MCF 10A (cell line): ENCODE measurements at regions of chrX and their contacts with region 1.

Region 1: DNA sequence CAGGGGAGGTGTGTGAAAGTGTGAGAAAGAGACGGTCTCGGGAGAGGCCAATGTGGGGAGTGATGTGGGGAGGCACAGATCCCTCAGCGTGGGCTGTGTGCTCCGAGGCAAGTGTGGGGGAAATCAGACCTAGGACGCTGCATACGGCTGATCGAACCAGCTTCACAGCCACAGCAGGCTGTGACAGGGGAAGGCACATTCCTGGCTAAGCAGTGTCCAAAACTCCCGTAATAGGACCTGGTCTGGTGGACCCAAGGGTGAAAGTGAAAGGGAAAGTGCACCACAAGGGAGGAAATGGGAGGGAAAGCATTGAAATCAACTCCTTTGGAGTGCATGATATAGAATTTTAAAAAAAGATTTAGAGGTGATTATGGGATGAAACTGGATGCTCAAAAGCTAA is 10.9 kb upstream of the RHOXF2 start:
- DNase-seq: no peak
- H3K4me3 Mint-ChIP-seq: no peak overlapping the region
- H3K27ac Mint-ChIP-seq: no peak overlapping the region
- H3K4me1 Mint-ChIP-seq: peaks cover 14% of the 10 kb centered on the region
- H3K27me3 Mint-ChIP-seq: peaks cover 47% of the 10 kb centered on the region
- CTCF ChIP-seq: no peak

Region 2: GRCh38 chrX:119235872-119236622 is 911.5 kb before region 1 on chrX and contains the start of gene PGRMC1:
- CTCF ChIA-PET with region 1: no interaction called
- POLR2A ChIA-PET with region 1: no interaction called
- intact Hi-C with region 1: no loop called
- DNase-seq: peak; percentile 81
- H3K4me3 Mint-ChIP-seq: peak within 1 kb of the TSS; percentile 76
- H3K27ac Mint-ChIP-seq: peak within 1 kb of the TSS; percentile 55
- H3K4me1 Mint-ChIP-seq: peaks cover 13% of the 10 kb centered on the region
- H3K27me3 Mint-ChIP-seq: peaks cover 41% of the 10 kb centered on the region
- CTCF ChIP-seq: no peak
- total RNA-seq, gene PGRMC1: 40.7 and 40.8 TPM in 2 replicates

Region 3: DNA sequence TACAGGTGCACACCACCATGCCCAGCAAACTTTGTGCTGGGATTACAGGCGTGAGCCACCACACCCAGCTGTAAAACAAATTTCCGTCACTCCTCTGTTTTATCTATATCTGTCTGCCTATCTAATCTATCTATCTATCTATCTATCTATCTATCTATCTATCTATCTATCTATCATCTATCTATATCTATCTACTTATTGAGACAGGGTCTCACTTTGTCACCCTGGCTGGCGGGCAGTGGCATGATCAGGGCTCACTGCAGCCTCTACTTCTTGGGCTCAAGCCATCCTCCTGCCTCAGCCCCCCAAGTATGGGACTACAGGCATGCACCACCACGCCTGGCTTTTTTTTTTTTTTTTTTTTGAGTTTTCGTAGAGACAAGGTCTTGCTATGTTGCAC is 231.2 kb before region 1 on chrX:
- CTCF ChIA-PET with region 1: no interaction called
- POLR2A ChIA-PET with region 1: no interaction called
- intact Hi-C with region 1: no loop called
- DNase-seq: no peak
- H3K4me3 Mint-ChIP-seq: no peak overlapping the region
- H3K27ac Mint-ChIP-seq: no peak overlapping the region
- H3K4me1 Mint-ChIP-seq: no peaks in the 10 kb centered on the region
- H3K27me3 Mint-ChIP-seq: peaks cover 11% of the 10 kb centered on the region
- CTCF ChIP-seq: no peak

Region 4: GRCh38 chrX:120137439-120137838 is 10.1 kb before region 1 on chrX:
- CTCF ChIA-PET with region 1: interaction called, 12 read pairs
- POLR2A ChIA-PET with region 1: no interaction called
- intact Hi-C with region 1: no loop called
- DNase-seq: peak; percentile 20
- H3K4me3 Mint-ChIP-seq: no peak overlapping the region
- H3K27ac Mint-ChIP-seq: no peak overlapping the region
- H3K4me1 Mint-ChIP-seq: no peaks in the 10 kb centered on the region
- H3K27me3 Mint-ChIP-seq: no peaks in the 10 kb centered on the region
- CTCF ChIP-seq: peak; percentile 10